Aorta (tissue), 5 donors: ENCODE measurements at regions of chr1 and their contacts with region 1.

Region 1: DNA sequence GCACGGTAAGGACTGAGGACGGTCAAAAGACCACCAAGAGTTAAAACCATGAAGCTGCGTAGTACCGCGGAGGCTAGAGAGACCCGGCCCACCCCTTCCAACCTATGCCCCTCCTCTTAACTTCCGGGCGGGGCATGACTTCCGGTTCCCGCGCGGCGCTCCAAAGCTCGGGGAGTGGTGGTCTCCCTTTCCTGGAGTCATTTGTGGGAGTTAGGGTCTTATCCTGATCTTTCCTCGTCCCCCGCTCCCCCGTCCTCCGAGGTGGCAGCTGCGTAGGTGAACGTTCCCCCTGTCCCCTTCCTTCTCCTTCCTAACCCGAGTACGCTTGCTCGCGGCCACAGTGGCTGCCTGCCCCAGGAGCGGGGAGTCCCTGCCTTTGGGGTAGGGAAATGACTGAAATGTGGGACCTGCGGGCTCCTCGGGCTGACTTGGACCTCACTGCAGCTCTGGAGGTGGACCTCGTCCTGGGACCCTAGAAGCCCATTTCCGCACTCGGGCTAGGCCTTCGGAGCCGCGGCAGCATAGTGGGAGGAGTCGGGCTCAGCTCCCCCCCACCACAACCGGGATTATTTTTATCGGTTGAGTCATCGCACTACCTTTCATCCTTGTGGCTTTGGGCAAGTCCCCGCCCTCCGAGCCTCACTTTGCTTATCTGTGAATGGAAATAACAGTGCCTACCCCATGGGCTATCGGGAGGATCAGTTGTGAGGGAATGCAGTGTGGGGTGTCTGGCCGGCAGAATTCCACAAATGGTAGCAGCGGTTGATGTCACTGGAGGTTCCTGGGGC is 24.1 kb downstream of the CELA3A start:
- DNase-seq: peak; percentile 93 to 95
- ATAC-seq: peak; percentile 95
- H3K4me3 ChIP-seq: peak overlapping the region; percentile 71 to 91
- H3K27ac ChIP-seq: peak overlapping the region; percentile 29 to 99
- H3K4me1 ChIP-seq: no peaks in the 10 kb centered on the region
- H3K27me3 ChIP-seq: no peaks in the 10 kb centered on the region

Region 2: GRCh38 chr1:22039594-22040285 is 14.2 kb after region 1 on chr1:
- intact Hi-C with region 1: no loop called
- DNase-seq: peak; percentile 73 to 79
- ATAC-seq: peak; percentile 62
- H3K4me3 ChIP-seq: no peak overlapping the region
- H3K27ac ChIP-seq: no peak overlapping the region
- H3K4me1 ChIP-seq: no peaks in the 10 kb centered on the region
- H3K27me3 ChIP-seq: no peaks in the 10 kb centered on the region

Region 3: GRCh38 chr1:22052115-22053016 is 26.8 kb after region 1 on chr1 and contains the start of gene CDC42:
- intact Hi-C with region 1: loop called in 1 of 2 experiments (anchors 2 kb)
- DNase-seq: peak; percentile 98
- ATAC-seq: peak; percentile 98
- H3K4me3 ChIP-seq: peak within 1 kb of the TSS; percentile 95 to 97
- H3K27ac ChIP-seq: peak within 1 kb of the TSS; percentile 93 to 99
- H3K4me1 ChIP-seq: peaks cover 0 to 5% of the 10 kb centered on the region in 2 donors
- H3K27me3 ChIP-seq: no peaks in the 10 kb centered on the region
- total RNA-seq, gene CDC42: 203 to 211 TPM

Region 4: DNA sequence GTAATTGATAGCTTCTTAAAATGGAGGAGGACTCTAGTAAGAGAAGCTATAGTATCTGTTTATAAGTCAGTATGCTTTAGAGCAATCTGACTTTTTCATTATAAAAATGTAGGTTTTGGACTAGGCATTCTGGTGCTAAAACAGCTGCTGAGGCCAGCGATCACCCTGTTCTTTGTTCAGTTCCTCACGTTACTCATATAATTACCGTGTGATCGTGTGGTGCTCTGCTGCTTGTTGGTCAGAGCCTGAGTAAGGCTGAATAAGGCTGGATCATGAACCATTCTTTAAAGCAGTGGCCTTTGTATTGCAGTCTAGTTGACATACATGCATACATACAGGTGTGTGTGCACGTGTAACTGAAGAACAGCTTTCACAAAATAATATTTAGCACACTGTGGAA is 52.2 kb after region 1 on chr1:
- intact Hi-C with region 1: no loop called
- DNase-seq: no peak
- ATAC-seq: no peak
- H3K4me3 ChIP-seq: no peak overlapping the region
- H3K27ac ChIP-seq: no peak overlapping the region
- H3K4me1 ChIP-seq: peaks cover 2 to 13% of the 10 kb centered on the region in 2 donors
- H3K27me3 ChIP-seq: no peaks in the 10 kb centered on the region

Region 5: GRCh38 chr1:22089787-22090186 is 64.2 kb after region 1 on chr1:
- intact Hi-C with region 1: no loop called
- DNase-seq: no peak
- ATAC-seq: no peak
- H3K4me3 ChIP-seq: peak overlapping the region in 1 of 2 donors; percentile 48
- H3K27ac ChIP-seq: no peak overlapping the region
- H3K4me1 ChIP-seq: peaks cover 3 to 5% of the 10 kb centered on the region in 2 donors
- H3K27me3 ChIP-seq: no peaks in the 10 kb centered on the region

Region 6: GRCh38 chr1:22142315-22143064 is 116.9 kb after region 1 on chr1:
- intact Hi-C with region 1: no loop called
- DNase-seq: no peak
- ATAC-seq: peak; percentile 6
- H3K4me3 ChIP-seq: peak overlapping the region; percentile 45 to 69
- H3K27ac ChIP-seq: no peak overlapping the region
- H3K4me1 ChIP-seq: no peaks in the 10 kb centered on the region
- H3K27me3 ChIP-seq: no peaks in the 10 kb centered on the region